Caco-2 (cell line): ENCODE measurements at regions of chr1 and their contacts with region 1.

Region 1: GRCh38 chr1:40050863-40051262 is 10.3 kb downstream of the CAP1 start:
- DNase-seq: no peak
- H3K4me3 ChIP-seq: no peak overlapping the region
- H3K4me3 Mint-ChIP-seq: no peak overlapping the region
- H3K27ac Mint-ChIP-seq: peak overlapping the region; percentile 10
- H3K4me1 ChIP-seq: no peaks in the 10 kb centered on the region
- H3K4me1 Mint-ChIP-seq: no peaks in the 10 kb centered on the region
- H3K27me3 ChIP-seq: no peaks in the 10 kb centered on the region
- H3K27me3 Mint-ChIP-seq: no peaks in the 10 kb centered on the region
- CTCF ChIP-seq: no peak

Region 2: GRCh38 chr1:39829791-39830533 is 220.9 kb before region 1 on chr1:
- CTCF ChIA-PET with region 1: no interaction called
- POLR2A ChIA-PET with region 1: interaction called, 13 read pairs
- intact Hi-C with region 1: no loop called
- DNase-seq: no peak
- H3K4me3 ChIP-seq: no peak overlapping the region
- H3K4me3 Mint-ChIP-seq: no peak overlapping the region
- H3K27ac Mint-ChIP-seq: peak overlapping the region; percentile 42
- H3K4me1 ChIP-seq: peaks cover 38% of the 10 kb centered on the region
- H3K4me1 Mint-ChIP-seq: peaks cover 45% of the 10 kb centered on the region
- H3K27me3 ChIP-seq: no peaks in the 10 kb centered on the region
- H3K27me3 Mint-ChIP-seq: no peaks in the 10 kb centered on the region
- CTCF ChIP-seq: no peak

Region 3: DNA sequence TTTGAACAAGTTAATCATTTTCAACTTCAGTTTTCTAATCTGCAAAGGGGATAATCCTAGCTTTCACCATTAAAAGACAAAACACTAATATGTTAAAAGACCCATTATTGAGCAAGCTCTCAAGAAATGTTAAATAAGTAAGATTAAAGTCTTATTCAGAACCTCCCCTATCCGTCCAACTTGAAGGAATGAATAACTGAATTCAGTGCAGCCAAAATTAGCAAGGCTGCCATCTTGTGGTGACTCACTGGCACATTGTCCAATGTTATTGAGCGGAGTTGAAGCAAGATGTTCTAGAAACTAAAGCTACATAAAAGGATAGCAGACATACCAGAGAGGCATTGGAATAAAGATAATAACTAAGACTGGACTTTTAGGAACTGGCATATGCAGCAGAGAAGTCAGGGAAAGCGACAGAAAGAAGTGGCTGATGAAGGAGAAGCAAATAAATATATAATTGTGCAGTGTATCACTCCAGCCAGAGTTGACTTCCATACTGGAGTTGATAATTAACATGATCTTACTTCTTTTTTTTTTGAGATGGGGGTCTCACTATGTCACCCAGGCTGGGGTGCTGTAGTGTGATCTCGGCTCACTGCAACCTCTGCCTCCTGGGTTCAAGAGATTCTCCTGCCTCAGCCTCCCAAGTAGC is 18.5 kb before region 1 on chr1:
- CTCF ChIA-PET with region 1: no interaction called
- POLR2A ChIA-PET with region 1: no interaction called
- intact Hi-C with region 1: no loop called
- DNase-seq: peak; percentile 37 to 40
- H3K4me3 ChIP-seq: no peak overlapping the region
- H3K4me3 Mint-ChIP-seq: no peak overlapping the region
- H3K27ac Mint-ChIP-seq: no peak overlapping the region
- H3K4me1 ChIP-seq: peaks cover 3% of the 10 kb centered on the region; the same call in 1 of the 2 replicates
- H3K4me1 Mint-ChIP-seq: peaks cover 13% of the 10 kb centered on the region
- H3K27me3 ChIP-seq: no peaks in the 10 kb centered on the region
- H3K27me3 Mint-ChIP-seq: no peaks in the 10 kb centered on the region
- CTCF ChIP-seq: peak; percentile 48 to 52

Region 4: GRCh38 chr1:40232444-40232843 is 181.6 kb after region 1 on chr1:
- CTCF ChIA-PET with region 1: no interaction called
- POLR2A ChIA-PET with region 1: no interaction called
- intact Hi-C with region 1: no loop called
- DNase-seq: no peak
- H3K4me3 ChIP-seq: no peak overlapping the region
- H3K4me3 Mint-ChIP-seq: no peak overlapping the region
- H3K27ac Mint-ChIP-seq: no peak overlapping the region
- H3K4me1 ChIP-seq: no peaks in the 10 kb centered on the region
- H3K4me1 Mint-ChIP-seq: no peaks in the 10 kb centered on the region
- H3K27me3 ChIP-seq: no peaks in the 10 kb centered on the region
- H3K27me3 Mint-ChIP-seq: no peaks in the 10 kb centered on the region
- CTCF ChIP-seq: no peak